ENCODE measurements at regions of chr7 and their contacts with region 1.

Region 1: DNA sequence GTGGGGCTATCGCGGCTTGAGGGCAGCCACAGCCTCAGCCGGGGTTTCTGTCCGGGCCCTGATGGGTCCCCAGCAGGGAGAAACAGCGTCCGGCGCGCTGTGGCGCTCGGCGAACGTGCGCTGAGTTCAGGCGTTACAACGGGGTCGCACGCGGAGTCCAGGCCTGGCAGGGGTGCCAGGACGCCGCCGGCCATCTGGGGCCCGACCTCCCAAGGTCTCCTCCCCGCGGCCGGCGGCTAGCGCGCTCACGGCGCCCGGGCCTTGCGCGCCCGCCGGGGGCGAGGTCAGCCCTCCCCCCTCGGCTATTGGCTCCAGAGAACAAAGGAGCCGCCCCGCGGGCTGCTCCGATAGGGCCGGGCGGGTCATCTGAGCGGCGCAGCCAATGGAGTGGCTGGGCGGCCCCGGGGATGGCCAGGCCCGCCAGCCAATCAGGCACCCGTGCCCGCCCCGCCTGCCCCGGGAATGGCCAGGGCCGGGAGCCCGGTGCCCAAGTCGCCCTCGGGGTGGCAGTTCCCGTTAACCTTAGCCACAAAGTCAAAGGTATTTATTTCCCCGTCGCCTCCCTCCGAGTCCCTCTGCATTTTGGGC is at the start of gene ZNF775:
- DNase-seq: peak; percentile 92 to 95 (median 94)
- H3K4me3 ChIP-seq: peak within 1 kb of the TSS; percentile 73 to 90 (median 84)
- H3K27ac ChIP-seq: peak within 1 kb of the TSS; percentile 50 to 90
- H3K4me1 ChIP-seq: peaks cover 11 to 54% (median 31%) of the 10 kb centered on the region in 4 experiments
- H3K27me3 ChIP-seq: no peaks in the 10 kb centered on the region

Region 2: DNA sequence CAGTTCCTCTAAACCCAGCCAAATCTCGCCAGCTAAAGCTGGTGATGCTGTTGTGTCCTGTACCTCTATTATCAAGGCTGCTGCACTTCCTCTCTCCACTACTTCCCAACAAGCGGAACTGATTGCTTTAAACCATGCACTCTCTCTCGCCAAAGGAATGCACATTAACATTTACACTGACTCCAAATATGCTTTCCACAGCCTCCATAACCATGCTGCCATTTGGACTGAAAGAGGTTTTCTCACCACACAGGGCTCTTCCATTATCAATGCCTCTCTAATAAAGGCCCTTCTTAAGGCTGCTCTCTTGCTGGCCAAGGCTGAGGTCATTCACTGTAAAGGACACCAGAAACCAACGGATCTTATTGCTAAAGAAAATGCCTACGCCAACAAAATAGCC is 67.2 kb before region 1 on chr7:
- CTCF ChIA-PET with region 1: no interaction called
- POLR2A ChIA-PET with region 1: no interaction called
- DNase-seq: no peak
- H3K4me3 ChIP-seq: no peak overlapping the region
- H3K27ac ChIP-seq: peak overlapping the region in 1 of 2 experiments; percentile 81
- H3K4me1 ChIP-seq: no peaks in the 10 kb centered on the region
- H3K27me3 ChIP-seq: no peaks in the 10 kb centered on the region

Region 3: GRCh38 chr7:150368096-150368883 is 10.7 kb before region 1 on chr7 and contains the start of gene REPIN1:
- CTCF ChIA-PET with region 1: interaction called, 9 read pairs
- POLR2A ChIA-PET with region 1: interaction called, 13 read pairs
- DNase-seq: peak; percentile 90 to 97 (median 96)
- H3K4me3 ChIP-seq: peak within 1 kb of the TSS; percentile 57 to 96 (median 83)
- H3K27ac ChIP-seq: peak within 1 kb of the TSS; percentile 96 to 97
- H3K4me1 ChIP-seq: peaks cover 39 to 78% (median 76%) of the 10 kb centered on the region in 4 experiments
- H3K27me3 ChIP-seq: no peaks in the 10 kb centered on the region

Region 4: GRCh38 chr7:150538259-150538658 is 159.3 kb after region 1 on chr7:
- CTCF ChIA-PET with region 1: no interaction called
- POLR2A ChIA-PET with region 1: no interaction called
- DNase-seq: peak in 2 of 3 donors; percentile 62
- H3K4me3 ChIP-seq: no peak overlapping the region
- H3K27ac ChIP-seq: no peak overlapping the region
- H3K4me1 ChIP-seq: no peaks in the 10 kb centered on the region
- H3K27me3 ChIP-seq: no peaks in the 10 kb centered on the region